WTC11 (cell line): ENCODE measurements at regions of chr9 and their contacts with region 1.

Region 1: GRCh38 chr9:124776954-124777665 is at the start of gene OLFML2A:
- DNase-seq: peak; percentile 66
- ATAC-seq: peak; percentile 47
- H3K4me3 Mint-ChIP-seq: peak within 1 kb of the TSS; percentile 85
- H3K27ac Mint-ChIP-seq: no peak within 1 kb of the TSS
- H3K4me1 Mint-ChIP-seq: peaks cover 35% of the 10 kb centered on the region
- H3K27me3 Mint-ChIP-seq: peaks cover 30% of the 10 kb centered on the region
- CTCF ChIP-seq: peak; percentile 37; the same call in 1 of the 2 replicates
- total RNA-seq, gene OLFML2A: 6.7 to 11.6 TPM (median 11.2 TPM) in 3 replicates

Region 2: GRCh38 chr9:124764774-124765438 is 12.2 kb before region 1 on chr9:
- CTCF ChIA-PET with region 1: interaction called, 16 read pairs
- POLR2A ChIA-PET with region 1: interaction called, 13 read pairs
- DNase-seq: no peak
- ATAC-seq: 0 out of 2 replicates have a peak, but pooled peaks have one; percentile 12
- H3K4me3 Mint-ChIP-seq: peak overlapping the region; percentile 47
- H3K27ac Mint-ChIP-seq: 0 out of 2 replicates have a peak overlapping the region, but pooled peaks have one; percentile 46
- H3K4me1 Mint-ChIP-seq: peaks cover 93% of the 10 kb centered on the region
- H3K27me3 Mint-ChIP-seq: no peaks in the 10 kb centered on the region; the same call in none of the 2 replicates
- CTCF ChIP-seq: no peak

Region 3: DNA sequence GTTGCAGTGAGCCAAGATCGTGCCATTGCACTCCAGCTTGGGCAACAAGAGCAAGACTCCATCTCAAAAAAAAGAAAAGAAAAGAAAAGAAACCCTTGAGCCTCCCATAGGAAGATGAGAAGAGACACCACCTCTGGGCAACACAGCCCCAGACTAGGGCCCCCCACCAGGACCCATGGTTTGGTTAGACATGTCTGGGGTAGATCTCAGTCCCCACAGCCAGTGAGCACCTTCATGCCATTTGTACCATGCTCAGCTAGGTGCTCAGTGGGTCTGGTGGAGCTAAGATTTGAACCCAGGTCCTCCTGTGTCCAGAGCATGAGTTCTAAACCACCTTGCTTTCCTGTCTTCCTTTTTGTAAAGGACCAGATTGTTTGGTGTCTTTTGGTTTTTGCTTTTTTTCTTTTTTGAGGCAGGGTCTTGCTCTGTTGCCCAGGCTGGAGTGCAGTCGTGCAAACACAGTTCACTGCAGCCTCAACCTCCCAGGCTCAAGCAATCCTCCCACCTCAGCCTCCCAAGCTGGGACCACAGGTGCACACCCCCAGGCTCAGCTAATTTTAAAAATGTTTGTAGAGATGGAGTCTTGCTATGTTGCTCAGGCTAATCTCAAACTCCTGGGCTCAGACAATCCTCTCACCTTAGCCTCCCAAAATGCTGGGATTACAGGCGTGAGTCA is 11.6 kb after region 1 on chr9:
- CTCF ChIA-PET with region 1: interaction called, 33 read pairs
- POLR2A ChIA-PET with region 1: no interaction called
- DNase-seq: no peak
- ATAC-seq: no peak
- H3K4me3 Mint-ChIP-seq: no peak overlapping the region
- H3K27ac Mint-ChIP-seq: no peak overlapping the region
- H3K4me1 Mint-ChIP-seq: no peaks in the 10 kb centered on the region
- H3K27me3 Mint-ChIP-seq: no peaks in the 10 kb centered on the region
- CTCF ChIP-seq: no peak

Region 4: GRCh38 chr9:124794902-124795491 is 17.9 kb after region 1 on chr9:
- CTCF ChIA-PET with region 1: interaction called, 33 read pairs
- POLR2A ChIA-PET with region 1: no interaction called
- DNase-seq: no peak
- ATAC-seq: peak; percentile 35; the same call in 1 of the 2 replicates
- H3K4me3 Mint-ChIP-seq: no peak overlapping the region
- H3K27ac Mint-ChIP-seq: no peak overlapping the region
- H3K4me1 Mint-ChIP-seq: 0 out of 2 replicates have a peak, but pooled peaks cover 4% of the 10 kb centered on the region
- H3K27me3 Mint-ChIP-seq: no peaks in the 10 kb centered on the region
- CTCF ChIP-seq: no peak

Region 5: GRCh38 chr9:124800306-124801259 is 23.5 kb after region 1 on chr9:
- CTCF ChIA-PET with region 1: interaction called, 32 read pairs
- POLR2A ChIA-PET with region 1: no interaction called
- DNase-seq: no peak
- ATAC-seq: no peak
- H3K4me3 Mint-ChIP-seq: no peak overlapping the region
- H3K27ac Mint-ChIP-seq: peak overlapping the region; percentile 60; the same call in 1 of the 2 replicates
- H3K4me1 Mint-ChIP-seq: 0 out of 2 replicates have a peak, but pooled peaks cover 4% of the 10 kb centered on the region
- H3K27me3 Mint-ChIP-seq: no peaks in the 10 kb centered on the region
- CTCF ChIP-seq: no peak

Region 6: GRCh38 chr9:124818431-124819281 is 41.5 kb after region 1 on chr9:
- CTCF ChIA-PET with region 1: interaction called, 147 read pairs
- POLR2A ChIA-PET with region 1: no interaction called
- DNase-seq: peak; percentile 57
- ATAC-seq: peak; percentile 91
- H3K4me3 Mint-ChIP-seq: no peak overlapping the region
- H3K27ac Mint-ChIP-seq: no peak overlapping the region
- H3K4me1 Mint-ChIP-seq: peaks cover 12% of the 10 kb centered on the region
- H3K27me3 Mint-ChIP-seq: no peaks in the 10 kb centered on the region
- CTCF ChIP-seq: no peak

Region 7: GRCh38 chr9:124861342-124862229 is 84.5 kb after region 1 on chr9 and contains the starts of genes ARPC5L and RPL35:
- CTCF ChIA-PET with region 1: interaction called, 935 read pairs
- POLR2A ChIA-PET with region 1: interaction called, 14 read pairs
- DNase-seq: peak; percentile 95
- ATAC-seq: peak; percentile 89
- H3K4me3 Mint-ChIP-seq: peak within 1 kb of the TSS; percentile 91
- H3K27ac Mint-ChIP-seq: peak within 1 kb of the TSS; percentile 96
- H3K4me1 Mint-ChIP-seq: peaks cover 14% of the 10 kb centered on the region
- H3K27me3 Mint-ChIP-seq: no peaks in the 10 kb centered on the region
- CTCF ChIP-seq: no peak
- total RNA-seq, gene ARPC5L: 40.0 to 47.2 TPM (median 40.5 TPM) in 3 replicates
- total RNA-seq, gene RPL35: 1,710 to 1,958 TPM (median 1,927 TPM) in 3 replicates